Endothelial cell of umbilical vein (primary cell): ENCODE measurements at regions of chr18 and their contacts with region 1.

Region 1: DNA sequence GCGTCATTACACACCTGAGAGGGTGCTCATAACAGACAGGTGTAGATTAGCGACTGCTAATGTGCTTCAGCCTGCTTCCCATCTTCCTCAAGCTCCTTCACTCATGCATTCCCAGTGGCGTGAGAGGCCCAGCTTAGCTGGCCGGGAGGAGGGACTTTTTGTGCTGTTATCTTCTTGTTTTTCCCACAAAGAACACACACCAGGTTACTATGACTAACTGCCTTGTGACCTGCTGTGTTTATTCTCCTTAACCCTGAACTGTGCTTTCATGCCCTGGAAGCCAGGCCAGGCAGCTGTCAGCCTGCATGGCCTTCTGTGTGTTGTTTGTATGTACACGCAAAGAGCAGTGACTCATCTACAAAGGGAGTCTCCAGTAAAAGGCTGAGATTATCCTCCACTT is 143.8 kb downstream of the PIEZO2 start:
- DNase-seq: peak; percentile 95
- H3K4me3 ChIP-seq: peak overlapping the region in 1 of 3 experiments; percentile 5
- H3K27ac ChIP-seq: peak overlapping the region; percentile 87
- H3K4me1 ChIP-seq: peaks cover 43% of the 10 kb centered on the region
- H3K27me3 ChIP-seq: no peaks in the 10 kb centered on the region
- CTCF ChIP-seq: no peak
- POLR2A ChIP-seq: no peak

Region 2: DNA sequence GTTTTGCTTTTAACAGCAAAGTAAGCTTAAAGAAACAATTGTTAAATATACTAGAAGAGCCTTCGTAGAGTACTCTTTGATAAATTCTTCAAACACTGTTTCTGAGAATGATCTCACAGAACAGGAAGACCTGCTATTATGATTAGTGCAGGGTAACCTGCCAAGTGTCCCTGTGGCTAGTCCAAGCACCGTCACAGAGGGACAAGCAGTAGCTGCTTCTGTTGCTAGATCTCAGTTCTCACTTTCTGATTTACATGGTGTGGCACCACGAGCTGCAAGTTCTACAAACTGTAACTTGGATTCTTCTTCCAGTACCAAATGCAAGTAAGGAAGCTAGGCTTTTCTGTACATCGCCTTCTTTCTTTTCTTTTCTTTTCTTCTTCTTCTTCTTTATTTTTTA is 22.3 kb after region 1 on chr18:
- CTCF ChIA-PET with region 1: no interaction called
- POLR2A ChIA-PET with region 1: no interaction called
- dilution Hi-C with region 1: no loop called
- intact Hi-C with region 1: loop called (anchors 1 kb)
- DNase-seq: peak; percentile 15
- H3K4me3 ChIP-seq: no peak overlapping the region
- H3K27ac ChIP-seq: no peak overlapping the region
- H3K4me1 ChIP-seq: peaks cover 12% of the 10 kb centered on the region
- H3K27me3 ChIP-seq: no peaks in the 10 kb centered on the region
- CTCF ChIP-seq: no peak
- POLR2A ChIP-seq: no peak